Endothelial cell of umbilical vein (primary cell): ENCODE measurements at regions of chr10 and their contacts with region 1.

Region 1: GRCh38 chr10:73167783-73168464 is at the starts of genes ECD and FAM149B1:
- DNase-seq: peak; percentile 98
- H3K4me3 ChIP-seq: peak within 1 kb of the TSS; percentile 24 to 95 (median 81)
- H3K27ac ChIP-seq: peak within 1 kb of the TSS; percentile 79
- H3K4me1 ChIP-seq: peaks cover 9% of the 10 kb centered on the region
- H3K27me3 ChIP-seq: no peaks in the 10 kb centered on the region
- CTCF ChIP-seq: no peak
- POLR2A ChIP-seq: peak; percentile 96
- total RNA-seq, gene ECD: 32.3 and 36.6 TPM in 2 replicates
- total RNA-seq, gene FAM149B1: 18.9 and 19.5 TPM in 2 replicates

Region 2: GRCh38 chr10:73218431-73219191 is 50.7 kb after region 1 on chr10:
- CTCF ChIA-PET with region 1: interaction called, 4 read pairs
- POLR2A ChIA-PET with region 1: no interaction called
- dilution Hi-C with region 1: no loop called
- intact Hi-C with region 1: loop called (anchors 1 kb)
- DNase-seq: peak; percentile 46
- H3K4me3 ChIP-seq: no peak overlapping the region
- H3K27ac ChIP-seq: no peak overlapping the region
- H3K4me1 ChIP-seq: no peaks in the 10 kb centered on the region
- H3K27me3 ChIP-seq: no peaks in the 10 kb centered on the region
- CTCF ChIP-seq: peak; percentile 32 to 37
- POLR2A ChIP-seq: no peak

Region 3: GRCh38 chr10:73246783-73247508 is 79.0 kb after region 1 on chr10 and contains the start of gene DNAJC9:
- CTCF ChIA-PET with region 1: no interaction called
- POLR2A ChIA-PET with region 1: no interaction called
- dilution Hi-C with region 1: no loop called
- intact Hi-C with region 1: loop called (anchors 2 kb)
- DNase-seq: peak; percentile 96
- H3K4me3 ChIP-seq: peak within 1 kb of the TSS; percentile 63 to 91 (median 89)
- H3K27ac ChIP-seq: peak within 1 kb of the TSS; percentile 68
- H3K4me1 ChIP-seq: peaks cover 36% of the 10 kb centered on the region
- H3K27me3 ChIP-seq: no peaks in the 10 kb centered on the region
- CTCF ChIP-seq: no peak
- POLR2A ChIP-seq: peak; percentile 95
- total RNA-seq, gene DNAJC9: 47.1 and 55.0 TPM in 2 replicates

Region 4: GRCh38 chr10:73358331-73359279 is 190.7 kb after region 1 on chr10 and contains the start of gene CFAP70:
- CTCF ChIA-PET with region 1: no interaction called
- POLR2A ChIA-PET with region 1: no interaction called
- dilution Hi-C with region 1: no loop called
- intact Hi-C with region 1: loop called (anchors 5 kb)
- DNase-seq: peak; percentile 97
- H3K4me3 ChIP-seq: peak within 1 kb of the TSS; percentile 52 to 82 (median 54)
- H3K27ac ChIP-seq: peak within 1 kb of the TSS; percentile 27
- H3K4me1 ChIP-seq: peaks cover 10% of the 10 kb centered on the region
- H3K27me3 ChIP-seq: peaks cover 10 to 11% of the 10 kb centered on the region in 2 experiments
- CTCF ChIP-seq: no peak
- POLR2A ChIP-seq: peak; percentile 53
- total RNA-seq, gene CFAP70: 0.12 and 0.27 TPM in 2 replicates

Region 5: DNA sequence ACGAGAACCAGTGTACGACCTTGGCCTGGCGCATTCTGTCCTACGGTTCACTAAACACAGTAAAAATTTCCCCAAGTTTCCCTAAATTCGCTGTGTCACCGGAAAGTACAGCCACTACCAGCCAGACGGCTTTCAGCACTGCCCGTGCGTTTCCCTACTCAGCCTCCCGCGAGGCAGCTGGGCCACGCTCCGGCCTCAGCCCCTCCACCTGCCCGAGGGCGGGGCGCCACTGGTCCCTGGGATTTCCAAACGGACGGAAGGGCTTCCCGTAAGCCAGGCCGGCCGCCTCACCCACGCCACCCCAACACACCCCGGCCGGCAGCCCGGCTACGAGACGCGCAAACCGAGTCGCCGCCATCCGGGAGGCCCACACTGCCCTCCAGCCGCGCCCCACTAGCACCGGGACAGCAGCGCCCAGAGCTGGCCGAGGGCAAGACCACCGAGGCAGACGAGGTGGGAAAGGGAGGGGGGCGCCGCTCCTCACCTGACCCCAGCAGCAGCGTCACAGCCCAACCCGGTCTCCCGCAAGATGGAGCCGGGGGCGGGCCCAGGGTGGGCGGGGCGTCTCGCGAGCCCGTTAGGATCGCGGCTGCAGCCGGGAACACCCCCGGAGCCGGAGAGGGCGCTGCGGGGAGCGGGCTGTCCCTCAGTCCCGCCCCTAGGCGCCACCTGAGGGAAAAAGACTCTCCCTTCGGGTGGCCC is 245.8 kb after region 1 on chr10 and contains the start of gene ANXA7:
- CTCF ChIA-PET with region 1: no interaction called
- POLR2A ChIA-PET with region 1: no interaction called
- dilution Hi-C with region 1: no loop called
- intact Hi-C with region 1: loop called (anchors 1 kb)
- DNase-seq: peak; percentile 88
- H3K4me3 ChIP-seq: peak within 1 kb of the TSS; percentile 45 to 85 (median 66)
- H3K27ac ChIP-seq: peak within 1 kb of the TSS; percentile 85
- H3K4me1 ChIP-seq: peaks cover 11% of the 10 kb centered on the region
- H3K27me3 ChIP-seq: peaks cover 0 to 5% of the 10 kb centered on the region in 2 experiments
- CTCF ChIP-seq: peak in 1 of 2 donors; percentile 57
- POLR2A ChIP-seq: peak; percentile 63
- total RNA-seq, gene ANXA7: 81.6 and 86.0 TPM in 2 replicates